Heart left ventricle (tissue), 16 donors: ENCODE measurements at regions of chr9 and their contacts with region 1.

Region 1: GRCh38 chr9:30201024-30201423 is 2183.4 kb upstream of the ACO1 start:
- DNase-seq: no peak
- ATAC-seq: no peak
- H3K4me3 ChIP-seq: no peak overlapping the region
- H3K27ac ChIP-seq: no peak overlapping the region
- H3K4me1 ChIP-seq: no peaks in the 10 kb centered on the region
- H3K27me3 ChIP-seq: no peaks in the 10 kb centered on the region
- CTCF ChIP-seq: no peak
- POLR2A ChIP-seq: no peak

Region 2: DNA sequence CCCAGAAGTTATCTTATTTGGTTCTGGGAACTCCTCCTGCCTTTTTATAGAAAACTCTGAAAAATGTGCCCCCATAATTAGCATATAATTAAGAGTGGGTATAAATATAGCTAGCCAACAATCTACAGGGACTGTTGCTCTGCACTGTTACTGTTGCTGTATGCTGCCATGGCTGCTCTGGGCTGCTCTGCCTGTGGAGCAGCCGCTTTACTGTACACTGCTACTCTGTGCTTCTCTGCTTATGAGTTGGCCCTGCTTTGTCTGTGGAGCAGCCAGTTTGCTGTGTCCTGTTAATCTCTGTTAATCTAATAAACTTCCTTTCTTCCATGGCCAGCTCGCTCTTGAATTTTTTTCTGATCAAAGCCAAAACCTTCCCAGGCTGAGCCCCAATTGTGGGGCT is 60.6 kb before region 1 on chr9:
- intact Hi-C with region 1: loop called in 1 of 10 experiments (anchors 10 kb)
- DNase-seq: no peak
- ATAC-seq: no peak
- H3K4me3 ChIP-seq: no peak overlapping the region
- H3K27ac ChIP-seq: no peak overlapping the region
- H3K4me1 ChIP-seq: no peaks in the 10 kb centered on the region
- H3K27me3 ChIP-seq: no peaks in the 10 kb centered on the region
- CTCF ChIP-seq: no peak
- POLR2A ChIP-seq: no peak